CD4-positive, alpha-beta T cell (primary cell): ENCODE measurements at regions of chr2 and their contacts with region 1.

Region 1: DNA sequence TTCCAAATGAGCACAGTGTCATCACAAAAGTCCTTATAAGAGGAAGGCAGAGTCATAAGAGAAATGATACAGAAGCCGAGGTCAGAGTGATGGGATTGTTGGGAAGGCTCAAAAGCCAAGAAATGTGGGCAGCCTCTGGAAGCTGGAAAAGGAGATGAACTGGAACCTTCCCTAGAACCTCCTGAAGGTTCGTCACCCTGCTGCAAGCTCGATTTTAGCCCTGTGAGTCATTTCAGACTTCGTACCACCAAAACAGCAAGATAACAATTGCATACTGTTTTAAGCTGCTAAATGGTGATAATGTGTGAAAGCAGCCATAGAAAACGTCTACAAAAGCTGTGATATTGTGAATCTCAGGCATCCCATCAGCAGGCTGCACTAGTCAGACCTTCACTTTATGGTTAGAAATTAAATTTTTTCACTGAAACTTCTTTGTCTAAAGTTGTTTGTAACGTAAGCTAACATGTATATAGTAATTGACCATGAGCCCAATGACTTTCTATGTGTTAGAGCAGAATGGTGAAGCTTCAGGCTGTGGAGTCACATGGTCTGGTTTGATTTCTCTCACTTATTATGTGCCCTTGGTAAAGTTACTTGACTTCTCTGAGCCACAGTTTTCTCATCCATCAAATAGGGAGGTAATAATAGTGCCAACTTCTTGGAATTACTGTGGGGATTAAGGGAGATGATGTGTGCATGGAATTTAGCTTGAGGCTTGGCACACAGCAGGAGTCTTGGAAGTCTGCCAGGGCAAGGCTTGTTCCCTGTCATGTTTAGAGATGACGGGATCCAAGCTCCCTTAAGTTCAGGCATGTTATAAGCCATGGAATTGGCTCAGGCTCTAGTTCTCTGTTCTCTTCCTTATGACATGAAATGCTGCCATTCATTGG is 132.0 kb upstream of the CCDC195 start:
- DNase-seq: no peak
- ATAC-seq: no peak
- H3K4me3 ChIP-seq: no peak overlapping the region
- H3K4me3 Mint-ChIP-seq: no peak overlapping the region
- H3K27ac ChIP-seq: no peak overlapping the region
- H3K27ac Mint-ChIP-seq: no peak overlapping the region
- H3K4me1 ChIP-seq: no peaks in the 10 kb centered on the region
- H3K4me1 Mint-ChIP-seq: peaks cover 5% of the 10 kb centered on the region
- H3K27me3 ChIP-seq: no peaks in the 10 kb centered on the region
- H3K27me3 Mint-ChIP-seq: no peaks in the 10 kb centered on the region
- CTCF ChIP-seq: no peak

Region 2: GRCh38 chr2:224793946-224794345 is 54.3 kb before region 1 on chr2:
- CTCF ChIA-PET with region 1: no interaction called
- POLR2A ChIA-PET with region 1: no interaction called
- intact Hi-C with region 1: loop called in 1 of 2 experiments (anchors 10 kb)
- DNase-seq: no peak
- ATAC-seq: no peak
- H3K4me3 ChIP-seq: no peak overlapping the region
- H3K4me3 Mint-ChIP-seq: no peak overlapping the region
- H3K27ac ChIP-seq: no peak overlapping the region
- H3K27ac Mint-ChIP-seq: no peak overlapping the region
- H3K4me1 ChIP-seq: no peaks in the 10 kb centered on the region
- H3K4me1 Mint-ChIP-seq: no peaks in the 10 kb centered on the region
- H3K27me3 ChIP-seq: no peaks in the 10 kb centered on the region
- H3K27me3 Mint-ChIP-seq: no peaks in the 10 kb centered on the region
- CTCF ChIP-seq: no peak

Region 3: DNA sequence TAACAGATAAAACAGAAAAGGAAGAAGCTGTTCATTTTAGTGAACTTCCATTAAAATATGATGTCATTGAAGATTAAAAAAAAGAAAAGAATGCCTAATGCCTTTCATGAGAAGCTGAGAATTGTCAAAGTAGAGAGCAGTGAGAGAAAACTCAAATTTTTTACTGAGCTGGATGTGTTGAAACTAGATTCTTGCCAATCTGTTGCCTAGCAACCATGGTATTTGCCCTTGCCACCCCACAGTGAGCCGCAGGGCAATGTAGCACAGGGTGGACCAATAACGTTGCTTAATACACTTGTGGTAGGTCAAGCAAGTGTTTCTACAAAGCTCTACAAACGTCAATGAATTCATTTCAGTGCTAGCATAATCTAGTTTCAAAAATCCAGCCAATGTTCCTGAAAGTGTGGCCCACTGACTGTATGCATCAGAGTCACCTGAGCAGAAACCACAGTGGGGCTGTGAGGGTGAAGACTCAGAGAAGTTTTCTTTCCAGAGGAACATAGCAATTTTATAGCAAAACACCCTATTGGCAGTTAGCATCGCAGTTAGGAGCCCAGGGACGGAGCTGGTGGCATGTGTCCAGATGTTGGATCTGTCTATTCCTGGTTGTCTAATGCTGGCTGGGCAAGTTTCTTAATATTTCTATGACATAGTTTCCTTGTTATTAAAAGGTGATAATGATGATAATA is 61.8 kb after region 1 on chr2:
- CTCF ChIA-PET with region 1: no interaction called
- POLR2A ChIA-PET with region 1: no interaction called
- intact Hi-C with region 1: no loop called
- DNase-seq: peak in 5 of 14 experiments; percentile 25 to 66 (median 35)
- ATAC-seq: peak; percentile 78
- H3K4me3 ChIP-seq: no peak overlapping the region
- H3K4me3 Mint-ChIP-seq: no peak overlapping the region
- H3K27ac ChIP-seq: no peak overlapping the region
- H3K27ac Mint-ChIP-seq: peak overlapping the region; percentile 69
- H3K4me1 ChIP-seq: peaks cover 6% of the 10 kb centered on the region
- H3K4me1 Mint-ChIP-seq: peaks cover 59% of the 10 kb centered on the region
- H3K27me3 ChIP-seq: no peaks in the 10 kb centered on the region
- H3K27me3 Mint-ChIP-seq: no peaks in the 10 kb centered on the region
- CTCF ChIP-seq: no peak

Region 4: DNA sequence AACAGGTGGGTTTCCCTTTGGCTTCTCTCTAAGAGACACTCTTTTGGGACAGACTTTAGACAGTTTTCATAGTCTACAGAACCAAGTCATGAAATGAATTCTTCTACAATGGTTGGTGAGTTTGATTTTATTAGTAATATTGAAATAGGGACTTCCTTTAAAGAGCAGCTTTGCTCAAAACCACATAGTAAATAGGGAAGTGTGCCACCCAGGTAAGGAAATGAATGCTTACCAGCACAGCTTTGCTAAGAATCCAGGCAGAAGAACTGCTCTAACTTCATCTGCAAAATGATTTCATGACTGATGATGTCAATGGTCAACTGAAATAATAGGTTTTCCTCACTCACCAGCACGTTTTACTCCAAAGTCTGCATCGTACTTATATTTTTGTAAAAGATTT is 640.5 kb after region 1 on chr2:
- CTCF ChIA-PET with region 1: no interaction called
- POLR2A ChIA-PET with region 1: no interaction called
- intact Hi-C with region 1: no loop called
- DNase-seq: no peak
- ATAC-seq: no peak
- H3K4me3 ChIP-seq: no peak overlapping the region
- H3K4me3 Mint-ChIP-seq: no peak overlapping the region
- H3K27ac ChIP-seq: no peak overlapping the region
- H3K27ac Mint-ChIP-seq: no peak overlapping the region
- H3K4me1 ChIP-seq: no peaks in the 10 kb centered on the region
- H3K4me1 Mint-ChIP-seq: no peaks in the 10 kb centered on the region
- H3K27me3 ChIP-seq: no peaks in the 10 kb centered on the region
- H3K27me3 Mint-ChIP-seq: peaks cover 4% of the 10 kb centered on the region
- CTCF ChIP-seq: no peak